Motor neuron (in vitro differentiated cells): ENCODE measurements at regions of chr17 and their contacts with region 1.

Region 1: DNA sequence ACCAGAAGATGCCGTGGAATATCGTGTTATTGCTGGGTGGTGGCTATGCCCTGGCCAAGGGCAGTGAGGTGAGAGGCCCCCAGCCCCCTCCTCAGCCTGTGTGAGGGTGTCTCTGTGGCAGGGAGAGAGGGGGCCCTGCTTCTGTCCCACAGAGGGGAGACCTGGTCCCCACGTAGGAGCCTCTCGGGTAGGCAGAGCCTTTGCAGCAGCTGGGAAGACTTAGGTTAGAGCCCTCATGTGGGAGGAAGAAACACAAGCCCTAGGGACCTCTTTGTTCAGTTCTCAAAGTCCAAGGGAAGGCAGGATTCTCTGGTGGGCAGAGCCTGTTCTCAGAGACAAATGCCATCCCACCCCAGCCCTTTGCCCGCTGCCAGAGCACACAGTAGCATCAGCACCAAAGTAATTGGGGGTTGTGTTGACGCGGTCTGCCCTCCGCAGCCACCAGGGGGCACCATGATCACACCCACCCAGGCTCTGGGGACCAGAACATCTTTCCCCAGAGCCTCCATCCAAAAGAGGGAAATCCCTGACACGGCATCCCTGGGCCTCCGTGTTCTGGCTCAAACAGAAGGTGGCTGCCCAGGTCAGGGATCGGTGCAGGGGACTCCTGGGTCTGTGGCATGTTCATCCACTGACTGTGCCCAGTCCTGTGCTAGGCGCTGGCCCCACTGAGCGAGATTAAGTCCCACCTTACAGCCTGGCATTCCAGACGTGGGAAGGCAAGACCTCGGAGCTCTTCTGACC is 11.5 kb upstream of the FOXN1 start:
- ATAC-seq: peak; percentile 65 to 98 (median 74)
- H3K4me3 ChIP-seq: no peak overlapping the region
- H3K27ac ChIP-seq: no peak overlapping the region
- H3K4me1 ChIP-seq: peaks cover 13 to 20% of the 10 kb centered on the region in 2 donors

Region 2: GRCh38 chr17:28384281-28385036 is 110.2 kb before region 1 on chr17:
- in situ Hi-C with region 1: loop called in 1 of 9 experiments (anchors 25 kb)
- ATAC-seq: peak in 7 of 8 experiments; percentile 19 to 98 (median 46)
- H3K4me3 ChIP-seq: no peak overlapping the region
- H3K27ac ChIP-seq: no peak overlapping the region
- H3K4me1 ChIP-seq: peaks cover 0 to 3% of the 10 kb centered on the region in 2 donors

Region 3: DNA sequence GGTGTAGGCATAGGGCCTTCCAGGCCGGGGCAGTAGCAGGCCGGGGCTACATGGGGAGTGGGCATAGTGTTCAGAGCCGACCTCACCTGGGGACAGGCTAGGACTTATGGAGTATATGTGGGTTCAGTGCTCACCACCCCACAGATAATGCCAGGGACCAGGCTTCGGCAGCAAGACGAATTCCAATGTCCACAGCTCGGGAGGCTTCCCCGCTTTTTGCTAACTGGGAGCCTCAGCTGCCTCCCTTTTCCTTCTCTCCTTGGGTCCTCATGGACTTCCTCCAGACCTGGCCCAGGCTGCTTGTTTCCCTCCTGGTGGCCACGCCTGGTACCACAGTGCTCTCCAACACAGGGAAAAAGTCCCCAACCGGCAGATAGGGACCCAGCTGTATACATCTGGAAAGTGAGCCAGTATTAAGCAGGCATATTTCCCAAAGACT is 68.5 kb before region 1 on chr17:
- in situ Hi-C with region 1: no loop called
- ATAC-seq: peak in 3 of 8 experiments; percentile 36 to 76 (median 39)
- H3K4me3 ChIP-seq: no peak overlapping the region
- H3K27ac ChIP-seq: no peak overlapping the region
- H3K4me1 ChIP-seq: no peaks in the 10 kb centered on the region

Region 4: DNA sequence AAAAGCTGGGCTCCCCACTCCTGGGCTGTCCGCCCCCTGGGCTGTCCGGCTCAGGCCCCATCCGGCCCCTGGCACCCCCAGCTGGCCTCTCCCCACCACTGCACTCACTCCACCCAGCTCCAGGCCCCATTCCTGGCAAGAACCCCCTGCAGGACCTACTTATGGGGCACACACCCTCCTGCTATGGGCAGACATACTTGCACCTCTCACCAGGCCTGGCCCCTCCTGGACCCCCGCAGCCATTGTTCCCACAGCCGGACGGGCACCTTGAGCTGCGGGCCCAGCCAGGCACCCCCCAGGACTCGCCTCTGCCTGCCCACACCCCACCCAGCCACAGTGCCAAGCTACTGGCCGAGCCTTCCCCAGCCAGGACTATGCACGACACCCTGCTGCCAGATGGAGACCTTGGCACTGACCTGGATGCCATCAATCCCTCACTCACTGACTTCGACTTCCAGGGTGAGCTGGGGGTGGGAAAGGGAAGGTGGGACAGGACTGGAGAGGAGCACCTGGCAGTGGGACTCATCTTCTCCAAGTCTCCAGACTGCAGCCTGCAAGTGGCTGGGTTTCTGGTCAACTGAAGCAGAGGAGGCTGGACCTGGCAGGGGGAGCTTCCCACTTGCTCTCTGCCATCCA is 40.2 kb after region 1 on chr17:
- in situ Hi-C with region 1: loop called in 2 of 9 experiments (anchors 5 to 10 kb)
- ATAC-seq: no peak
- H3K4me3 ChIP-seq: no peak overlapping the region
- H3K27ac ChIP-seq: no peak overlapping the region
- H3K4me1 ChIP-seq: no peaks in the 10 kb centered on the region

Region 5: GRCh38 chr17:28547623-28548416 is 53.2 kb after region 1 on chr17:
- in situ Hi-C with region 1: loop called in 1 of 9 experiments (anchors 10 kb)
- ATAC-seq: peak in 4 of 8 experiments; percentile 19 to 68 (median 57)
- H3K4me3 ChIP-seq: no peak overlapping the region
- H3K27ac ChIP-seq: no peak overlapping the region
- H3K4me1 ChIP-seq: peaks cover 15 to 23% of the 10 kb centered on the region in 2 donors

Region 6: DNA sequence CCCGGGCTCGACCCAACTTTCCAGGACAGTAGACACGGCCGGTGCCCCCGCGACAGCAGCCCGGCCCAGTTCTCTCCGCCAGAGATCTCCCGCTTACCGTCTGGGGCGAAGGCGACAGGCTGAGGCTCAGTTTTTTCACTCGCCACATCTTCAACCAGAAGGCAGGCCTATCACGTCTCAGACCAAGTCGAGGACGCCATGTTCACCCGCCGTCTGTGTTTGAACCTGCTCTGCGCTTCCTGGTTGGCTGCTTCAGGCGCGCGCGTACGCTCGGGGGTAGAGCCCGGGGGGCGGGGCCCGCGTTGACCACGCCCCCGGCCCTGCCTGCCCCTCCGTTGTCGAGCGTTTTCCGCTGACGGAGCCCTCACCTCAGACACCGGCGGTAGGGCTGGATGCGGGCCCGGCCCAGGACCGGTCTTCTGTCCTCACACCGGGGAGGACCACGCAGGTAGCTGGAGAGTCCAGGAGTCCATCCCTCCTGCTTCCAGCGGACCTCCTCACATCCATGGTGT is 104.2 kb after region 1 on chr17 and contains the start of gene SPAG5:
- in situ Hi-C with region 1: loop called in 1 of 9 experiments (anchors 25 kb)
- ATAC-seq: peak; percentile 78 to 96 (median 94)
- H3K4me3 ChIP-seq: peak within 1 kb of the TSS; percentile 42 to 69 (median 54)
- H3K27ac ChIP-seq: peak within 1 kb of the TSS; percentile 14 to 56
- H3K4me1 ChIP-seq: peaks cover 0 to 4% of the 10 kb centered on the region in 2 donors
- total RNA-seq, gene SPAG5: 2.3 to 65.8 (median 9.8) TPM

Region 7: GRCh38 chr17:29048440-29049368 is 554.1 kb after region 1 on chr17:
- in situ Hi-C with region 1: no loop called
- ATAC-seq: peak; percentile 72 to 97 (median 94)
- H3K4me3 ChIP-seq: no peak overlapping the region
- H3K27ac ChIP-seq: peak overlapping the region; percentile 83 to 90
- H3K4me1 ChIP-seq: peaks cover 45 to 49% of the 10 kb centered on the region in 2 donors